H1 (cell line): ENCODE measurements at regions of chr1 and their contacts with region 1.

Region 1: DNA sequence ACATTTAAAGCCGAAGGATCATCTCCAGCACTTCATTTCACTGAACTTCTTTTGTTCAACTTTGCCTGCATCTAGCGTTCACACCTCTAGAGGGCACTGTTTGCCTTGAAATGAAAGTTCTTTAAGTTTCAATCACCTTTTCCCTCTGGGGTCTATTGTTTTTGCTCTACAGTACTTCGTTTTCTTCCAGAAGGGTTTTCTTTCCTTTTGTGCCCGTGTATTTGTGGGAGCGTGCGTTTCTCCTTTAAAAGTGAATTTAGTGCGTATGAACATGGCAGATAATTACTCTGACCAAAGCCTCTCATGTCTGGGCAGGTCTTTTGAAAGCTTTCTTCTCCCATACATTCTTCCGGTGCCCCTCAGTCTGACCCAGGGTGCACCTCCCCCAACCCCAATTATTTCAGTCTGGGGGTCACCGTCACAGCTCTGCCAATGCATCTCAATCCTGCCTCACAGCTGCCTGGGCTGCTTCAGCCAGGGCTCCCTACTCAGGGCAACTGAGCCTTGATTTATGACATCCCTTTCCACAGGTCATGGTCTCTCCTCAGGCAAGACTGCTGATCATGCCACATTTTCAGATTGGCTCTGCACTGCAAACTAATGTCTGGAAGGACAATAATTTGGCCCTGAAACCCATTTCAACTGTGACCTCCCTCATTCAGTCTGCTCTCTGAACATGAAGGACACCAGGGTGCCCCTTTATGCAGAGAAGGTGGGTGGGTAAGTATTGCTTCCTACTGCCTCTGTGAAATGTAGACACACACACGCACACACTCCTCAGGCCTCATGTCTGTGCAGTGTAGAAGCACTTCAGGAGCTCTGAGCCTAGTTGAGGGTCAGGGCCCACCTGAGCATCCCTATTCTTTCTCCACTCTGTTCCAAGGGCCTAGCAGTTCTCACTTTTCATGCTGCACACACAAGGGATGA is 88.6 kb downstream of the NUF2 start:
- DNase-seq: peak; percentile 65 to 83
- H3K4me3 ChIP-seq: peak overlapping the region in 1 of 4 experiments; percentile 39; a peak in 1 of 8 replicates
- H3K27ac ChIP-seq: no peak overlapping the region
- H3K4me1 ChIP-seq: peaks cover 2 to 11% (median 6%) of the 10 kb centered on the region in 4 experiments; a peak in 4 of 7 replicates
- H3K27me3 ChIP-seq: no peaks in the 10 kb centered on the region
- CTCF ChIP-seq: peak in 2 of 3 experiments; percentile 63 to 84; a peak in 3 of 4 replicates
- EP300 ChIP-seq: no peak
- POLR2A ChIP-seq: no peak
- RAD21 ChIP-seq: peak; percentile 89 to 91

Region 2: DNA sequence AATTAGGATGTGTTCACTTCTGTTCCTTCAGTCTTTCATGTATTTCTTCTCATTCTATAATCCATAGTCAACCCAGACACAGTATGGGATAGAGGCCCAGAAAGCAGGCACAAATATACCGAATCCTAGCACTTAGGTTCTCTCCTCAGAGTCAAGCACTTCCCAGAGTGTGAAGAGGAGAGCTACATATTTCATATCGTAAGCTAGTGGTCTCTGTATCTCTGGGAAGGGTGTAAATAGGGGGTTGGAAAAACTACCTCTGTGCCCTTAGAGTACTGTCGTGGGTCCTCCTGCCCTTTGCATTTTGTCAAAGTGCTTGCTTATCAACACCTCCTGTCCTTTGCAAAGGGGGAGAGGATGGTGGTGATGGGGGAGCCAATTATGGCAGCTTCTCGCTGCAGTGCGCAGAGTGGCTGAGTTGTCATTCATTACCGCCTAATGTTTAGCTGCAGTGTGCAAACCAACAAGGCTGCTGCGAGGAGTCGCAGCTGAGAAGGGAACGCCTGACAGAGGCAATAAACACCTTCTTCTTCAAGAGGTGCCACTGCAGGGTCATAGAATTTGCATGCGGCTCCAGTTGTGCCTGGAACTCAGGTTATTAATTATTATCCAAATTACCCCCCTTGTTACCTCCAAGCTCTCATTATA is 94.1 kb after region 1 on chr1:
- CTCF ChIA-PET with region 1: no interaction called
- POLR2A ChIA-PET with region 1: no interaction called
- DNase-seq: no peak
- H3K4me3 ChIP-seq: peak overlapping the region in 1 of 4 experiments; percentile 12; a peak in 1 of 8 replicates
- H3K27ac ChIP-seq: no peak overlapping the region
- H3K4me1 ChIP-seq: peaks cover 2 to 15% (median 10%) of the 10 kb centered on the region in 4 experiments; a peak in 4 of 7 replicates
- H3K27me3 ChIP-seq: no peaks in the 10 kb centered on the region
- CTCF ChIP-seq: no peak
- EP300 ChIP-seq: no peak
- POLR2A ChIP-seq: no peak
- RAD21 ChIP-seq: no peak

Region 3: DNA sequence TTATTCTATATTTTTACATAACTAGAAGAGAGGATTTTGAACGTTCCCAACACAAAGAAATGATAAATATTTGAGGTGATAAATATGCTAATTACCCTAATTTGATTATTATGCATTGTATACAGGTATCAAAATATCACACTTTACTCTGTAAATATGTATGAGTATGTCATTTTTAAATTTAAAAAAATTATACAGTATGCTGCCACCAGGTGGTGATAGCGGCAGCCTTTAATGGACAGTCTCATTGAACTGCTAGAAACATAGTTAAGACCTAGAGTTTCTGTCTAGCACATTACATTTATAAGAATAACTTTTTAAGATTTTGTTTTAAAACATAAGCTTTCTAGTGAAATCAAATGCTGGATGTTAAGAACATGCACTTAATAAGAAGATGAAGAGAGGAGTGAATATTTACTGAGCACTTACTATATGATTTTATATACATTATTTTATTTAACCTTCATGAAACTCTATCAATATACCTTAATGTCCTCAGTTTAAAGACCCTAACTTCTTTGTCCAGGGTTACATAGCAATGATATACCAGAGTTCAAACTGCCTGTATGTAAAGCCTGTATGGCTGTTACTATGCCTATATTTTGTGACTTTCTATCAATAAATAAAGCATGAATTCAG is 118.5 kb after region 1 on chr1:
- CTCF ChIA-PET with region 1: interaction called, 13 read pairs
- POLR2A ChIA-PET with region 1: no interaction called
- DNase-seq: no peak
- H3K4me3 ChIP-seq: no peak overlapping the region
- H3K27ac ChIP-seq: no peak overlapping the region
- H3K4me1 ChIP-seq: no peaks in the 10 kb centered on the region
- H3K27me3 ChIP-seq: 0 out of 7 replicates have a peak, but pooled peaks cover 0 to 2% (median 0%) of the 10 kb centered on the region in 4 experiments
- CTCF ChIP-seq: peak in 2 of 3 experiments; percentile 26 to 38; a peak in 2 of 4 replicates
- EP300 ChIP-seq: no peak
- POLR2A ChIP-seq: no peak
- RAD21 ChIP-seq: peak; percentile 59 to 60

Region 4: GRCh38 chr1:163701783-163702374 is 291.5 kb after region 1 on chr1:
- CTCF ChIA-PET with region 1: interaction called, 10 read pairs
- POLR2A ChIA-PET with region 1: no interaction called
- DNase-seq: no peak
- H3K4me3 ChIP-seq: no peak overlapping the region
- H3K27ac ChIP-seq: no peak overlapping the region
- H3K4me1 ChIP-seq: no peaks in the 10 kb centered on the region
- H3K27me3 ChIP-seq: no peaks in the 10 kb centered on the region
- CTCF ChIP-seq: peak in 1 of 3 experiments; percentile 1; a peak in 2 of 4 replicates
- EP300 ChIP-seq: no peak
- POLR2A ChIP-seq: no peak
- RAD21 ChIP-seq: peak; percentile 50 to 62